ENCODE measurements at regions of chr4 and their contacts with region 1.

Region 1: DNA sequence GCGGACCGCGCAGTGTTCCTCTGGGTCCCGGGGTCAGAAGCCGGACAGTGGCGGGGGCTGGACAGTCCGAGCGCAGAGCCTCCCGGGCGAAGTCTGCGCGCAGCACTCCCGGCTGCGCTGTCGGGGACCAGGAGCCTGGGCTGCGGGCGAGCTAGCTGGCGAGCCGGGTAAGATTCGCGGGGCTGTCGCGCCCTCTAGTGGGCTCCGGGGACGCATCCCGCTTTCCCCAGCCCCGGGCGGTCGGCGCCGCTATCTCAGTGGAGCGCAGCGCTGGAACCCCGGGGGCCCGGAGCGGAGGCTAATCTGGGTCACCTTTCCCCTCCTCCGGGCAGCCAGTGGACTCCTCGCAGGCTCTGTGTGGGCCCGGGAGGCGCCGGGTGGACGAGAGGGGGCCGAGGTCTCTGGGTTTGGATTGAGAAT is 4.2 kb downstream of the PDGFRA start:
- DNase-seq: peak; percentile 80
- ATAC-seq: peak; percentile 93
- H3K4me3 Mint-ChIP-seq: peak overlapping the region; percentile 65
- H3K27ac Mint-ChIP-seq: no peak overlapping the region
- H3K4me1 Mint-ChIP-seq: peaks cover 29% of the 10 kb centered on the region
- H3K27me3 Mint-ChIP-seq: peaks cover 45% of the 10 kb centered on the region

Region 2: GRCh38 chr4:53015681-53016080 is 1217.6 kb before region 1 on chr4:
- CTCF ChIA-PET with region 1: interaction called, 17 read pairs
- POLR2A ChIA-PET with region 1: no interaction called
- DNase-seq: no peak
- ATAC-seq: no peak
- H3K4me3 Mint-ChIP-seq: no peak overlapping the region
- H3K27ac Mint-ChIP-seq: no peak overlapping the region
- H3K4me1 Mint-ChIP-seq: peaks cover 24% of the 10 kb centered on the region
- H3K27me3 Mint-ChIP-seq: no peaks in the 10 kb centered on the region

Region 3: GRCh38 chr4:53908661-53909078 is 324.6 kb before region 1 on chr4:
- CTCF ChIA-PET with region 1: interaction called, 87 read pairs
- POLR2A ChIA-PET with region 1: no interaction called
- DNase-seq: peak; percentile 39
- ATAC-seq: peak; percentile 68
- H3K4me3 Mint-ChIP-seq: no peak overlapping the region
- H3K27ac Mint-ChIP-seq: no peak overlapping the region
- H3K4me1 Mint-ChIP-seq: peaks cover 13% of the 10 kb centered on the region
- H3K27me3 Mint-ChIP-seq: peaks cover 42% of the 10 kb centered on the region

Region 4: GRCh38 chr4:53929955-53930798 is 303.1 kb before region 1 on chr4:
- CTCF ChIA-PET with region 1: interaction called, 55 read pairs
- POLR2A ChIA-PET with region 1: no interaction called
- DNase-seq: peak; percentile 68
- ATAC-seq: peak; percentile 70
- H3K4me3 Mint-ChIP-seq: no peak overlapping the region
- H3K27ac Mint-ChIP-seq: no peak overlapping the region
- H3K4me1 Mint-ChIP-seq: no peaks in the 10 kb centered on the region
- H3K27me3 Mint-ChIP-seq: no peaks in the 10 kb centered on the region

Region 5: GRCh38 chr4:54176202-54176601 is 57.1 kb before region 1 on chr4:
- CTCF ChIA-PET with region 1: no interaction called
- POLR2A ChIA-PET with region 1: no interaction called
- DNase-seq: no peak
- ATAC-seq: no peak
- H3K4me3 Mint-ChIP-seq: no peak overlapping the region
- H3K27ac Mint-ChIP-seq: no peak overlapping the region
- H3K4me1 Mint-ChIP-seq: no peaks in the 10 kb centered on the region
- H3K27me3 Mint-ChIP-seq: no peaks in the 10 kb centered on the region

Region 6: DNA sequence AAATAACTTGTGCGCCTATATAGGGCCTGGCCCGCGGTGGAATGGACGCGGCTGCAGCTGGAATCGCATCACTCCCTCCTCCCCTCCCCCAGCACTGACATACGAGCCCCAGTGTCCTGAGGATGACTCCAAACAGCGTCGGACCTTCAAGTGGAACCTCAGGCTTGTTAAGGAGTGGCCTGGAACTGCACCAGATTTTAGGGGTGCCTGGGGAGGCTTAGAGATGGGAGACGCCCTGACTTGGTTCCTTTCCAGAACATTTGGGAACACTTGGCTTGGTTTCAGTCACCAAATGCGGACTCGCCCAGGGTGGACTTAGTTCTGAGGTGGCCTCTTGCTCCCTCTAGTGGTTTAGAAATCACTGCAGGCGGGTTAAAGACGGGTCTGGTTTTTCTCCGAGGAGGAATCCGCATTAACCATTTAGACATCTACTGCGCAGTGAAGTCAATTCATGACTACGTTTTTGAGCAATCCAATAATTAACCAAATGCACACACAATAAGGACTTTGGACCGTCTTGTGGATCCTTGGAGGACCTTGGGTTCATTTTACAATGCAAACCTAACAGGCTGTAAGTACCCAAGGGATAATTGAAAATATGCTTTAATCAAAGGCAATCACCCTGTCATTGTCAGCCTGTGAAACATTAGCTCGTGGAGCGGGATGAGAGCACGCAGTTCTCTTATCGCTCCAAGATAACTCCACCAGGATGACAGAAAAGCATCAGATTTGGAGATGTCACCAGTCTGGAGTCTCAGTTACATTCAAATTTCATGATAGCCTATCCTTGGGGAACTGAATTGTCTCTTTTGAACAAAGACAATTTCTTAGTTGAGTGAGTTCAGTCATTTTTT is 15.4 kb before region 1 on chr4:
- CTCF ChIA-PET with region 1: interaction called, 24 read pairs
- POLR2A ChIA-PET with region 1: no interaction called
- DNase-seq: peak; percentile 68
- ATAC-seq: peak; percentile 76
- H3K4me3 Mint-ChIP-seq: no peak overlapping the region
- H3K27ac Mint-ChIP-seq: no peak overlapping the region
- H3K4me1 Mint-ChIP-seq: peaks cover 4% of the 10 kb centered on the region
- H3K27me3 Mint-ChIP-seq: peaks cover 11% of the 10 kb centered on the region

Region 7: GRCh38 chr4:54368281-54369265 is 135.3 kb after region 1 on chr4:
- CTCF ChIA-PET with region 1: no interaction called
- POLR2A ChIA-PET with region 1: no interaction called
- DNase-seq: no peak
- ATAC-seq: no peak
- H3K4me3 Mint-ChIP-seq: no peak overlapping the region
- H3K27ac Mint-ChIP-seq: no peak overlapping the region
- H3K4me1 Mint-ChIP-seq: no peaks in the 10 kb centered on the region
- H3K27me3 Mint-ChIP-seq: peaks cover 8% of the 10 kb centered on the region

Measured in activated CD8-positive, alpha-beta T cell treated with anti-CD3 and anti-CD28 coated beads, Interleukin-2, amount 10 ng/mL, durations not matched to agents 7 days and 5 days (primary cell).